A673 (cell line): ENCODE measurements at regions of chr15 and their contacts with region 1.

Region 1: GRCh38 chr15:84734794-84735479 is 13.5 kb upstream of the ZNF592 start:
- DNase-seq: peak; percentile 35
- H3K4me3 ChIP-seq: no peak overlapping the region
- H3K27ac ChIP-seq: no peak overlapping the region
- H3K4me1 ChIP-seq: no peaks in the 10 kb centered on the region
- H3K27me3 ChIP-seq: no peaks in the 10 kb centered on the region
- CTCF ChIP-seq: no peak

Region 2: DNA sequence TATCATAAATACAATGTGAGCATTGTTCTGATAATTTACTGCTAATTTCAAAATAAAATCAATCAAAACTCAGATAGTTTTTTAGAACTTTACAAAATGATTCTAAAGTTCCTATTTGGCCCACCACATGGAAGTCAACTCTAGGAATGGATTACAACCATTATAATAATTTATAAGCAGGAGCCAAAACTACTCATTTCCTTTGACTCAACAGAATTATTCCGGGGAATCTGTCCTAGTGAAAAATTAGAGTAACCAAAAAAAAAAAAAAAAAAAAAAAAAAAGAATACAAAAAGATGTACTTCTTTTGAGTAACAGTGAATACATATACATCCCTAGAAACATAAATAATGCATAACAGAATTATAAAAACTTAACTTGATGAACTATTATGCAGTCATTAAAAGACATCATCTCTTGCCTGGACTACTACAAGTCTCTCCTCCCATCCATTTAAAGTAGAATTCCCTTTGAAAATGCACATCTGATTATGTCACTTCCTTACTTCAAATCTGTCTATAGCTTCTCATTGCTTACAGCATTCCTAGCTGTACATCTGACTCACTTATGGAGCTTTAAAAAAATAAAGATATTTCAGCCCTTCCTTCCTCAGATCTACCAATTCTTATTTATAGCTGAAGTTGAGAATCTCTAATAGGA is 1570.7 kb before region 1 on chr15:
- CTCF ChIA-PET with region 1: no interaction called
- POLR2A ChIA-PET with region 1: no interaction called
- intact Hi-C with region 1: no loop called
- DNase-seq: peak; percentile 13
- H3K4me3 ChIP-seq: no peak overlapping the region
- H3K27ac ChIP-seq: no peak overlapping the region
- H3K4me1 ChIP-seq: no peaks in the 10 kb centered on the region
- H3K27me3 ChIP-seq: no peaks in the 10 kb centered on the region
- CTCF ChIP-seq: no peak

Region 3: GRCh38 chr15:84748274-84749110 is 13.6 kb after region 1 on chr15 and contains the start of gene ZNF592:
- CTCF ChIA-PET with region 1: no interaction called
- POLR2A ChIA-PET with region 1: interaction called, 11 read pairs
- intact Hi-C with region 1: no loop called
- DNase-seq: peak; percentile 77
- H3K4me3 ChIP-seq: peak within 1 kb of the TSS; percentile 75
- H3K27ac ChIP-seq: peak within 1 kb of the TSS; percentile 86
- H3K4me1 ChIP-seq: peaks cover 23% of the 10 kb centered on the region
- H3K27me3 ChIP-seq: no peaks in the 10 kb centered on the region
- CTCF ChIP-seq: no peak
- total RNA-seq, gene ZNF592: 32.9 and 37.2 TPM in 2 replicates

Region 4: GRCh38 chr15:84911879-84912660 is 177.1 kb after region 1 on chr15:
- CTCF ChIA-PET with region 1: no interaction called
- POLR2A ChIA-PET with region 1: no interaction called
- intact Hi-C with region 1: no loop called
- DNase-seq: no peak
- H3K4me3 ChIP-seq: no peak overlapping the region
- H3K27ac ChIP-seq: no peak overlapping the region
- H3K4me1 ChIP-seq: no peaks in the 10 kb centered on the region
- H3K27me3 ChIP-seq: no peaks in the 10 kb centered on the region
- CTCF ChIP-seq: no peak

Region 5: DNA sequence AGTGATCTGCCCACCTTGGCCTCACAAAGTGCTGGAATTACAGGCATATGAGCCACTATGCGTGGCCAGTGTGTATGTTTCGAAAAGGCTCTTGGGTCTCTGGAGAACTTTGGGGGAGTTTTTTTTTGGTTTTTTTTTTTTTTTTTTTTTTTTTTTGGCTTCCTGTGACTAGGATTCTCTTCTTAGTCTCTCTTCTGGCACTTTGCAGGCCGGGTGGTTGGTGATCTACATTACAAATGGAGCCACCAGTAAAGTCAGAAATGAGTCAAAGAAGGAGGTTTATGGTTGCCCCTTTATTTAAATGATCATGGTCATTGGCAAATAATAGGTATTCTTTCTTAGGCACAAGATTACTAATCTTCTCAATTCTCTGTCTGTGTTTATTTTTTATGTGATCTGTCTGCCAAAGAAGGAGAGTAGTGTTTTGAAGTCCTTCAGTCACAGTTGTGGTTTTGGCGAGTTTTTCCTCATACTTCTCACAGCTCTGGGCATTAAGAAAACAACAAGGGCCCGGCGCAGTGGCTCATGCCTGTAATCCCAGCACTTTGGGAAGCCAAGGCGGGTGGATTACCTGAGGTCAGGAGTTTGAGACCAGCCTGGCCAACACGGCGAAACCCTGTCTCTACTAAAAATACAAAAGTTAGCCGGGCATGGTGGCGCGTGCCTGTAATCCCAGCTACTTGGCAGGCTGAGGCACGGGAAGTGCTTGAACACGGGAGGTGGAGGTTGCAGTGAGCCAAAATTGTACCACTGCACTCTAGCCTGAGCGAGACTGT is 285.1 kb after region 1 on chr15:
- CTCF ChIA-PET with region 1: no interaction called
- POLR2A ChIA-PET with region 1: interaction called, 10 read pairs
- intact Hi-C with region 1: no loop called
- DNase-seq: no peak
- H3K4me3 ChIP-seq: no peak overlapping the region
- H3K27ac ChIP-seq: no peak overlapping the region
- H3K4me1 ChIP-seq: peaks cover 6% of the 10 kb centered on the region
- H3K27me3 ChIP-seq: no peaks in the 10 kb centered on the region
- CTCF ChIP-seq: no peak